ENCODE measurements at regions of chr1 and their contacts with region 1.

Region 1: GRCh38 chr1:31155216-31155841 is 84.4 kb downstream of the NKAIN1 start:
- DNase-seq: peak; percentile 26 to 48
- ATAC-seq: peak; percentile 65 to 77
- H3K4me3 ChIP-seq: peak overlapping the region; percentile 63 to 80 (median 67)
- H3K27ac ChIP-seq: peak overlapping the region; percentile 81 to 85 (median 81)
- H3K4me1 ChIP-seq: peaks cover 0 to 4% of the 10 kb centered on the region in 2 donors
- H3K27me3 ChIP-seq: no peaks in the 10 kb centered on the region
- CTCF ChIP-seq: peak in 3 of 5 experiments; percentile 22 to 53 (median 45)
- POLR2A ChIP-seq: peak in 1 of 2 donors; percentile 14

Region 2: DNA sequence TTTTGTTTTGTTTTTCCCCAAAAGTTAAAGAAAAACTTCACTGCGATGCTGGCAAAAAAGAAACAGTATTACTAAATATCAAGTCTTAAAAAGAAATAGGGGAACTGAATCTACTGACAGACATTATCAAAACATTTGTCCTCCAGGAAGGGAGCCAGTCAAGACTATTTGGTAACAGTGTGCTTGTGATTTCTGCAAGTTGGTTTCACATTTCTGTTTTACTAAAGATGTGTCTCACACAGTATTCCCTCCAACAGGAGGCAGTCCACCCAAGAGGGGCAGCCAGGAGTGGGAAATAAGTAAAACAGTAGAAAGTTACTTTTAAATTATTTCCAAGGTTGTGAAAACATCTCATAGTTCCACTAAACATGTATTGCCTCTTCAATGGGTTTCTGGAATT is 172.4 kb before region 1 on chr1:
- in situ Hi-C with region 1: no loop called
- intact Hi-C with region 1: loop called (anchors 10 kb)
- DNase-seq: peak; percentile 35 to 49
- ATAC-seq: peak; percentile 93 to 94
- H3K4me3 ChIP-seq: peak overlapping the region in 1 of 4 donors; percentile 26
- H3K27ac ChIP-seq: peak overlapping the region; percentile 67 to 82 (median 77)
- H3K4me1 ChIP-seq: peaks cover 59 to 61% of the 10 kb centered on the region in 2 donors
- H3K27me3 ChIP-seq: no peaks in the 10 kb centered on the region
- CTCF ChIP-seq: peak in 4 of 5 experiments; percentile 18 to 56 (median 33)
- POLR2A ChIP-seq: no peak

Region 3: GRCh38 chr1:31065310-31066217 is 89.8 kb before region 1 on chr1 and contains the start of gene PUM1:
- in situ Hi-C with region 1: no loop called
- intact Hi-C with region 1: loop called (anchors 5 kb)
- DNase-seq: peak; percentile 98
- ATAC-seq: peak; percentile 95 to 97
- H3K4me3 ChIP-seq: peak within 1 kb of the TSS; percentile 79 to 91 (median 80)
- H3K27ac ChIP-seq: peak within 1 kb of the TSS; percentile 92 to 97 (median 94)
- H3K4me1 ChIP-seq: peaks cover 31 to 32% of the 10 kb centered on the region in 2 donors
- H3K27me3 ChIP-seq: no peaks in the 10 kb centered on the region
- CTCF ChIP-seq: peak; percentile 11 to 45 (median 16)
- POLR2A ChIP-seq: peak; percentile 83 to 87
- total RNA-seq, gene PUM1: 56.7 to 111 (median 76.4) TPM

Region 4: GRCh38 chr1:31296486-31297276 is 141.4 kb after region 1 on chr1 and contains the starts of genes SNRNP40 and ZCCHC17:
- in situ Hi-C with region 1: no loop called
- intact Hi-C with region 1: loop called (anchors 2 kb)
- DNase-seq: peak; percentile 97
- ATAC-seq: peak; percentile 100
- H3K4me3 ChIP-seq: peak within 1 kb of the TSS; percentile 80 to 99 (median 98)
- H3K27ac ChIP-seq: peak within 1 kb of the TSS; percentile 88 to 98 (median 94)
- H3K4me1 ChIP-seq: peaks cover 44% of the 10 kb centered on the region in 2 donors
- H3K27me3 ChIP-seq: no peaks in the 10 kb centered on the region
- CTCF ChIP-seq: peak in 2 of 5 experiments; percentile 21 to 28
- POLR2A ChIP-seq: peak; percentile 78 to 92
- total RNA-seq, gene SNRNP40: 21.9 to 32.1 (median 23.6) TPM
- total RNA-seq, gene ZCCHC17: 14.0 to 26.8 (median 17.5) TPM

Region 5: DNA sequence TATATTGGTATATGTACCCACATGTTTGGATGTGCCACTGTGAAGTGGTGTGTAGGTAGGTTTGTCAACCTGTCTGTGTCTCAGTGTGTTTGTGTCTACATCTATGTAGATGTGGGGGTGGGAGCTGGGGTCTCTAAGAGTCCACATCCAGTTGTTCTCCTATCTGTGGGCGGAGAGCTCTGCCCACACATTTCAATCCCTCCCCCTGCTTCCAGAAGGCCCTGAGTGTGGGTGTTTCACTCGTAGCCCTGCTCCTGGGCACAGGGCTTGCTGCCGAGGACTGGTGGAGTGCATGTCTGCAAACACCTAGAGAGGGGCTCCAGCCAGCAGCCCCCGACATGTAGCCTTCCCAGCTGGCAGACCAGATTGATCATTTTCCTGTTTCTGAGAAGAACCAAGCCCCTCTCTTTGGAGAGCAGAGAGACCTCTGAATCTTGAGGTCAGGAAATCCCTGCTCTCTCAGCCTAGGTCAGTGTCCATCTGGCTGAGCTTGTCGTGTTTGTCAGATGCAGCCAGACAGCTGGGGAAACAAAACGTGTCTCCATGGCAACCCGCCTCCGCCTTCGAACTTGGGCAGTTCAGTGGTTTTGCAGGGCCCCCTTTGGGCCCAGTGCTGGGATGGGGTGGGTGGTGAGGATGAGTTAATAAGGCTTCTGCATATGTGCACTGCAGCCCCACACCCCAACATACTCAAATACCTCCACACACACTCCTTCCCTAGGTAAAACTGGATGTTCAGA is 1578.4 kb after region 1 on chr1:
- in situ Hi-C with region 1: no loop called
- intact Hi-C with region 1: no loop called
- DNase-seq: no peak
- ATAC-seq: no peak
- H3K4me3 ChIP-seq: no peak overlapping the region
- H3K27ac ChIP-seq: no peak overlapping the region
- H3K4me1 ChIP-seq: no peaks in the 10 kb centered on the region
- H3K27me3 ChIP-seq: no peaks in the 10 kb centered on the region
- CTCF ChIP-seq: no peak
- POLR2A ChIP-seq: no peak